ENCODE measurements at regions of chr19 and their contacts with region 1.

Region 1: GRCh38 chr19:45496349-45496953 is 396 bp downstream of the RTN2 start:
- DNase-seq: peak in 9 of 14 experiments; percentile 28 to 74 (median 50)
- ATAC-seq: peak; percentile 28
- H3K4me3 ChIP-seq: peak overlapping the region; percentile 65
- H3K4me3 Mint-ChIP-seq: peak overlapping the region; percentile 81
- H3K27ac ChIP-seq: no peak overlapping the region
- H3K27ac Mint-ChIP-seq: no peak overlapping the region
- H3K4me1 ChIP-seq: peaks cover 66% of the 10 kb centered on the region
- H3K4me1 Mint-ChIP-seq: peaks cover 43% of the 10 kb centered on the region
- H3K27me3 ChIP-seq: peaks cover 23 to 25% of the 10 kb centered on the region in 2 experiments
- H3K27me3 Mint-ChIP-seq: peaks cover 33% of the 10 kb centered on the region
- CTCF ChIP-seq: no peak

Region 2: DNA sequence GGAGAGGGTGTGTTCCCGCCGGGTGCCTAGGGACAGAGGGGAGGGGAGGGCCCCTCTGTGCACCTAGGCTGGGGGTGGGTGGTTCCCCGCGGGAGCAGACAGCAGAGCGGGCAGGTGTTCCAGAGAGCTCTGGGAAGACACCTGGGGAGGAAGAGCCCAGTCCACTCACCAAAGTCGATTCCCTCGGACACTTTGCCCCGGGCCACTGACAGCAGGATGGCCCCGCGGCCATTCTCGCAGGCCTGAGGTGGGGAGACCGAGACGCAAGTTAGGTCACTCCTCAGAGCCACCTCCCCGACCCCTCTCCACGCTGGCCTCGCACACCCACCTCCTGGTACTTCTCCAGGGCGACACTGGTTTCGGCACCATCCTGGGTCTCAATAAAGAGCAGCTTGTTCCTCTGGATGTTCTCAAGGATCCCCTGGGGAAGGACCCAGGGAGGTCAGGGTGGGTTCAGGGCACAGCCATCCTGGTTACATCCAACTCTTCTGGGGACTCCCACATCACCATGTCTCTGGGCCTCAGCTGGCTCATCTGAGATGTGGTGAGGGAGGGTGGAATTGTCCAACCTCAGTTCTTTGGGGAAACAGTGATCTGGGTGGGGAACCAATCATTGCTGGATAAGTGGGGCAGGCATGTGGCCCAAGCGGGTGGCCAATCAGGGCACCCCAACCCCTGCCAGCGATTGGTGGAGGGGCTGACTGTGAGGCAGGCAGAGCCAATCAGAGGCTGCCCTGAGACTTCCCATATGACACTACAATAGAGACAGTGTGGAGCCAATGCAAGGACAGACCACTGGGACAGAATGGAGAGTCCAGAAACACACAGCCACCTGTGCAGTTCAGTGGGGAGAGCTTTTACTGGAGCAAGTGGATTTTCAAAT is 143.3 kb before region 1 on chr19:
- CTCF ChIA-PET with region 1: no interaction called
- POLR2A ChIA-PET with region 1: no interaction called
- intact Hi-C with region 1: no loop called
- DNase-seq: peak in 1 of 14 experiments; percentile 13
- ATAC-seq: no peak
- H3K4me3 ChIP-seq: no peak overlapping the region
- H3K4me3 Mint-ChIP-seq: no peak overlapping the region
- H3K27ac ChIP-seq: no peak overlapping the region
- H3K27ac Mint-ChIP-seq: no peak overlapping the region
- H3K4me1 ChIP-seq: no peaks in the 10 kb centered on the region
- H3K4me1 Mint-ChIP-seq: no peaks in the 10 kb centered on the region
- H3K27me3 ChIP-seq: no peaks in the 10 kb centered on the region
- H3K27me3 Mint-ChIP-seq: no peaks in the 10 kb centered on the region
- CTCF ChIP-seq: no peak

Region 3: DNA sequence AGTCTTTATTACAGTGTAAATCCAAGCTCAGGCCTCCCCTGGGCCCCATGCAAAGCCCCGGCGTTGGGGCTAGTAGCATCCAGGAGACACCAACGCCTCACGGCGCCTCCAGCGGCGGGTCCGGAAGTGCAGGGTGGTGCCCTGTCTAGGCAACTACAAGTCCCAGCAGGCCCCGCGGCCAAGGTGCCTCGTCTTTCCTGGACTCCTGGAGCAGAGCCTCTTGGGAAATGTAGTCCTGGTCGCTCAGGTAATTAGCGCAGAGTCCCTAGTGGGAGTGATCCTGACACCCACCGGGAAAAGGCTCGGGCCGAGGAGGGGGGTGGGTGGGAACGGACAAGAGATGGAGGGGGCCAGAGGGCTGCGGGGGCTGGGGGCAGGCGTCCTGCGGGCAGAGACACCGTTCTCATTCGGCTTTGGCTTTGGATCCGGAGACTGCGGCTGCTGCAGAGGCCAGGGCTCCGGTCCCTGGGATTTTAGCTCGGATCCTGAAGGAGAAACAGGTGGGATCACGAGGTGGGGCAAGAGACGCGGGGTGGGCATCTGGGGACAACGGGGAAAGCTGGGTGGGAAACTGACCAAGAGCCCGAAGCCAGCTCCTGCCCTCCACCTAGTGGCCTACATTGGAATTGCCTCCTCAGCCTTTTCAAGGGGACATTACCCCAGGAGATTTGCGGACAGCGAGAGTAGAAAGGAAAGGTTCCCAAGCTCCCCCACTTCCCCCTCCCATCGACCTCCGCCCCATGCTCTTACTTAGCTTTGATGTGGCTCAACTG is 11.0 kb before region 1 on chr19:
- CTCF ChIA-PET with region 1: interaction called, 32 read pairs
- POLR2A ChIA-PET with region 1: interaction called, 7 read pairs
- intact Hi-C with region 1: loop called in 1 of 2 experiments (anchors 2 kb)
- DNase-seq: peak; percentile 95 to 98 (median 97)
- ATAC-seq: peak; percentile 99
- H3K4me3 ChIP-seq: peak overlapping the region; percentile 69
- H3K4me3 Mint-ChIP-seq: peak overlapping the region; percentile 98
- H3K27ac ChIP-seq: no peak overlapping the region
- H3K27ac Mint-ChIP-seq: peak overlapping the region; percentile 47
- H3K4me1 ChIP-seq: peaks cover 14% of the 10 kb centered on the region
- H3K4me1 Mint-ChIP-seq: peaks cover 6% of the 10 kb centered on the region
- H3K27me3 ChIP-seq: no peaks in the 10 kb centered on the region
- H3K27me3 Mint-ChIP-seq: peaks cover 7% of the 10 kb centered on the region
- CTCF ChIP-seq: peak; percentile 86